BJ (cell line): ENCODE measurements at regions of chr12 and their contacts with region 1.

Region 1: GRCh38 chr12:53746592-53747092 is 5.1 kb downstream of the CISTR start:
- DNase-seq: peak; percentile 50
- H3K4me3 ChIP-seq: no peak overlapping the region
- H3K27me3 ChIP-seq: peaks cover 57% of the 10 kb centered on the region
- CTCF ChIP-seq: peak; percentile 100

Region 2: GRCh38 chr12:53543539-53543938 is 203.1 kb before region 1 on chr12:
- CTCF ChIA-PET with region 1: interaction called, 12 read pairs
- POLR2A ChIA-PET with region 1: no interaction called
- DNase-seq: no peak
- H3K4me3 ChIP-seq: no peak overlapping the region
- H3K27me3 ChIP-seq: no peaks in the 10 kb centered on the region
- CTCF ChIP-seq: peak; percentile 90

Region 3: DNA sequence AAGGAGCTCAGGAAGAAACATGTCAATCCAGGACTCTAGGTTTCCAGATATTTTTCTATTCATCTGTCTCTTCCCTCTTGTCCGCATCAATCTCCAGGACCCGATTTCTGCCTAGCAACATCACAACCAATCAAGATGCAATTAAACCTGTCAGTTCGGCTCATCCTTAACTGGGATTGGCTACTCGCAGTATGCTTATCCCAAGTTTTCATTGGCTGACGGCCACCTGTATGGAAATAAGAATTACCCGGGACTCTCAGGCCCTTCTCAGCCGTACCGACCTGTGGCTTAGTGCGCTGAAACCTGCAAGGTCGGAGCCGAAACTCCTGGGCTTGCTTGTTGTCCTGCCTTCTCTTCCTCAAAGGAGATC is 50.4 kb before region 1 on chr12:
- CTCF ChIA-PET with region 1: interaction called, 324 read pairs
- POLR2A ChIA-PET with region 1: no interaction called
- DNase-seq: no peak
- H3K4me3 ChIP-seq: no peak overlapping the region
- H3K27me3 ChIP-seq: peaks cover 30% of the 10 kb centered on the region
- CTCF ChIP-seq: no peak

Region 4: DNA sequence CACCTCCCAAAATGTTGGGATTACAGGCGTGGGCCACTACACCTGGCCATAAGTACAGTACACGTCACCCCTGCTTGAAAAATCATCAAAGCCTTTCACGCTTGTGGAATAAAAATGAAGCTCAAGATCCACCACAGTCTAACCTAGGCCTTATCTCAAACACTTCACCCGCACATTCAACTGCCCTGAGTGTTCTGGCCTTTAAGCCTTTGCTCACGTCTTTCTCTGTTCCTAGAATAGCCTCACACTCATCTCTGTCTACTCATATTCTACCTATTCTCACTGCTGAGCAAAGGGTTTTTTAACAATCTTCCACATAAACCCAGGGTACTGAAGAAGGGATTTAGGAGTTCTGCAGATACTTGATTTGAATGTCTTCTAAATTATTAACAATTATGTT is 29.3 kb before region 1 on chr12:
- CTCF ChIA-PET with region 1: interaction called, 29 read pairs
- POLR2A ChIA-PET with region 1: no interaction called
- DNase-seq: no peak
- H3K4me3 ChIP-seq: no peak overlapping the region
- H3K27me3 ChIP-seq: no peaks in the 10 kb centered on the region
- CTCF ChIP-seq: no peak

Region 5: DNA sequence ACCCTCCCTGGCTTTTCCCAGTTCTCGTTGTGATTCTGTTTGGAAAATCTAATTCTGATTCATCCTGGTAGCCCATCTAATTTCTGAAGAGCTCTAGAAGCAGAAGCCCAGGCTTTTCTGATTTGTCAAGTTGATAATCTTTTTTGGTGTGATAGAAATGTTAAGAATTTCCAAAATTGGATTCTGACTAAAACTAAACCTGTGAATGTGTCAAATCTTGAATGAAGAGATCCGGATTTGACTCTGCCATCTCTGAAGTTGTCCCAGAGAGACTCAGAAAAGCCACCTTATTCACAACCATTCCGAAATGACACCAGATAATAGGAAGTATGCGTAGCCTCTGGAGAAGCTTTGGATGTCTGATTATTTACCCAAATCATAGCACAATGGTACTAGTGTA is 18.0 kb after region 1 on chr12:
- CTCF ChIA-PET with region 1: interaction called, 124 read pairs
- POLR2A ChIA-PET with region 1: no interaction called
- DNase-seq: no peak
- H3K4me3 ChIP-seq: no peak overlapping the region
- H3K27me3 ChIP-seq: peaks cover 4% of the 10 kb centered on the region
- CTCF ChIP-seq: no peak

Region 6: DNA sequence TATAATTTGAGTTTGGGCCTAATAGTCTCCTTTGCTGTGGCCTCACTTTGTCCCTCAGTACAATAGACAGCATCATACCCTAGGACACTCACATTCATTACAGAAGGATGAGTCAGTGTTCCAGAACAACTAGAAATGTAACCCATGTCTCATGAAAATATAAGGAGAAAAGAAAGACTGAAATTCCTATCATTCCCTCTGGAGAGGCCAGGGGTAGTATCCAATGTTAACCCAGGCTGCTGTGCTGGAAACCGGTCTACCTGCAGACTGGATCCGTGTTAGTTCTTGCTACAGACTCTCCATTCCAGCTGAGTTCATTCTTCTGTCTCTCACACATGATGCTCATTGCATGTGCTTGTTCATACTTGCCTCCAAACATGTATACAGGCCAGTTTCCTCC is 116.2 kb after region 1 on chr12:
- CTCF ChIA-PET with region 1: no interaction called
- POLR2A ChIA-PET with region 1: no interaction called
- DNase-seq: peak; percentile 15
- H3K4me3 ChIP-seq: no peak overlapping the region
- H3K27me3 ChIP-seq: no peaks in the 10 kb centered on the region
- CTCF ChIP-seq: no peak